ENCODE measurements at regions of chr17 and their contacts with region 1.

Region 1: GRCh38 chr17:48131216-48131824 is 23.8 kb downstream of the SNX11 start:
- DNase-seq: peak; percentile 49
- H3K4me3 Mint-ChIP-seq: no peak overlapping the region
- H3K27ac Mint-ChIP-seq: no peak overlapping the region
- H3K4me1 Mint-ChIP-seq: no peaks in the 10 kb centered on the region
- H3K27me3 Mint-ChIP-seq: no peaks in the 10 kb centered on the region

Region 2: DNA sequence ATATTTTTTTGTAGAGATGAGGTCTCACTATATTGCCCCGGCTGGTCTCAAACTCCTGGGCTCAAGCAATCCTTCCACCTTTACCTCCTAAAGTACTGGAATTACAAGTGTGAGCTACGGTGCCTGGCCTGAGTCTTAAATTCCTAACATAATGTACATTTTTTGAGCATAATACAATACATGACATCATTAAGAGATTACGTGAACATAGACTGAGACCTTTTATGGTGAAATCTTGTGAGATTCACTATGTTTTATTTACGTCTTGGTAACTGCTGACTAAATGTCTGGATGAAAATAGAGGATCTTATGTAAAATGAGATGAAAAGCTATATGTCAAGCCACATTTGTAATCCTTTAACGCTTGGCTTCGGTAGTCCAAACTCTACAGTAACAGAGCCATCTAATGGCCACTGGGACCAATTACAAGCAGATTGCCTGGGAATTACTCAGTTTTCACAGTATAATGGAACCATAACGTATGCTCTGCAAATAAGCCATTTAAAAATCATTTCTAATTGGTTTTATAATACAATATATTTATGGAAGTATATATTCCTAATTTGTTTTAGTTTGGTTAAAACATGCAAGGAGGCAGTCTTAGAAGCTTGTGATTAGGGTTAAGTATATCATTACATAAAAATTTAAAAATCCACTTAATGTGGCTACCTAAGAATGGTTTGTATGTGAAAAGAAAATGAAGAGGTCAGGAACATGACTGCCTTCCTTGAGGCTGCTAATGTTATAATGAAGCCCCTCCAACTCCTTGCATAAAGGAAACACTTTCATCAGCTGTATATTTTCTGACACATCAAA is 815.7 kb before region 1 on chr17:
- CTCF ChIA-PET with region 1: no interaction called
- POLR2A ChIA-PET with region 1: no interaction called
- intact Hi-C with region 1: no loop called
- DNase-seq: peak; percentile 40
- H3K4me3 Mint-ChIP-seq: no peak overlapping the region
- H3K27ac Mint-ChIP-seq: no peak overlapping the region
- H3K4me1 Mint-ChIP-seq: no peaks in the 10 kb centered on the region
- H3K27me3 Mint-ChIP-seq: no peaks in the 10 kb centered on the region

Region 3: DNA sequence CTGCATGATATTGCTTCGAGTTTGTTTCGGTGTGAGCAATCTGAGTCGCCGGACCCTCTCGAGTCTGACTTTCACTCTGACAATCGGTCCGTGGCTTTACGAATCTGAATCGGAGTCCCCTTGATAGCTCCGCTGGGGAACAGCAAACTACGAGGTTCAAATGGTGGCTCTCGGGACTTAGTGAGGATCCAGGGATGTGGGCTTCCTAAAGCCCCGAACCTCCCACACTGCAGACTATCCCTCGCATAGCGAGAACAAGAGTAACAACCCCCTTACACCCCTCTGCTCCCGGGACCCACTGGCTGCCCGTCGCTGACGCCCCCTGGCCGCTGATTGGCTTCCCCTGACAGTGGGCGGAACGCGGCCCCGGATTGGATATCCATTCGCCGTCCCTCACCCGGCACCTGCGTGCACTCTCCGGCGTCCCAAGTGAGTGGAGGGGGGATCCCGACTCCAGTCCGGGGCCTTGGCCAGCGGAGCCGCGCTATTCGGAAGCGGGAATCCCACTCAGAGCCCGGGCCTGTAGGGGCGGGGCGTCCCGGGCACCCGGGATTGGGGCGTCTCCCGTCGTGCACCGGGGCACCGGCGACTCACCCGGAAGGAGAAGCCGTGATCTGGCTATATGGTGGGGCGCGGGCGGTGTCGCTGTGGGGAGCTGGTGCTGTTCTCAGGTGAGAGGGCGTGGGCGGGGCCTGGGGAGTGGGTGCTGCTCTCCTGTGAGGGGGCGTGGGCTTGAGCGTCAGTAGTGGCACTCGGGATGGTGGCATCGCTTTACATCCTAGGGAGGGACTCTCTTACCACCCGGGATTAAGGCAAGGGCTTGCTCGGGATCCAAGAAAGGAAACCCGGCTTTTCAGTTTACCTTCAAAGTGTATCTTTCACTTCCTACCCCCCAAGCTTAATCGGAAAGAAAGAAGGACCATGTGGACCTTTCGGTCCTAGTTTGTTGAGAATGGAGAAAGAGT is 23.9 kb before region 1 on chr17 and contains the start of gene SNX11:
- CTCF ChIA-PET with region 1: interaction called, 13 read pairs
- POLR2A ChIA-PET with region 1: no interaction called
- intact Hi-C with region 1: no loop called
- DNase-seq: peak; percentile 95
- H3K4me3 Mint-ChIP-seq: peak within 1 kb of the TSS; percentile 100
- H3K27ac Mint-ChIP-seq: peak within 1 kb of the TSS; percentile 97
- H3K4me1 Mint-ChIP-seq: peaks cover 59% of the 10 kb centered on the region
- H3K27me3 Mint-ChIP-seq: no peaks in the 10 kb centered on the region
- total RNA-seq, gene SNX11: 19.7 to 21.7 TPM

Region 4: GRCh38 chr17:48175692-48176470 is 44.6 kb after region 1 on chr17:
- CTCF ChIA-PET with region 1: no interaction called
- POLR2A ChIA-PET with region 1: no interaction called
- intact Hi-C with region 1: no loop called
- DNase-seq: no peak
- H3K4me3 Mint-ChIP-seq: no peak overlapping the region
- H3K27ac Mint-ChIP-seq: no peak overlapping the region
- H3K4me1 Mint-ChIP-seq: peaks cover 41% of the 10 kb centered on the region
- H3K27me3 Mint-ChIP-seq: no peaks in the 10 kb centered on the region

Region 5: GRCh38 chr17:48618256-48618897 is 487.1 kb after region 1 on chr17:
- CTCF ChIA-PET with region 1: interaction called, 6 read pairs
- POLR2A ChIA-PET with region 1: no interaction called
- intact Hi-C with region 1: loop called (anchors 10 kb)
- DNase-seq: peak; percentile 89
- H3K4me3 Mint-ChIP-seq: peak overlapping the region; percentile 17
- H3K27ac Mint-ChIP-seq: peak overlapping the region; percentile 40
- H3K4me1 Mint-ChIP-seq: peaks cover 42% of the 10 kb centered on the region
- H3K27me3 Mint-ChIP-seq: peaks cover 89% of the 10 kb centered on the region

Measured in activated CD4-positive, alpha-beta memory T cell treated with anti-CD3 and anti-CD28 coated beads for 36 hours (primary cell).